ENCODE measurements at regions of chr16 and their contacts with region 1.

Region 1: DNA sequence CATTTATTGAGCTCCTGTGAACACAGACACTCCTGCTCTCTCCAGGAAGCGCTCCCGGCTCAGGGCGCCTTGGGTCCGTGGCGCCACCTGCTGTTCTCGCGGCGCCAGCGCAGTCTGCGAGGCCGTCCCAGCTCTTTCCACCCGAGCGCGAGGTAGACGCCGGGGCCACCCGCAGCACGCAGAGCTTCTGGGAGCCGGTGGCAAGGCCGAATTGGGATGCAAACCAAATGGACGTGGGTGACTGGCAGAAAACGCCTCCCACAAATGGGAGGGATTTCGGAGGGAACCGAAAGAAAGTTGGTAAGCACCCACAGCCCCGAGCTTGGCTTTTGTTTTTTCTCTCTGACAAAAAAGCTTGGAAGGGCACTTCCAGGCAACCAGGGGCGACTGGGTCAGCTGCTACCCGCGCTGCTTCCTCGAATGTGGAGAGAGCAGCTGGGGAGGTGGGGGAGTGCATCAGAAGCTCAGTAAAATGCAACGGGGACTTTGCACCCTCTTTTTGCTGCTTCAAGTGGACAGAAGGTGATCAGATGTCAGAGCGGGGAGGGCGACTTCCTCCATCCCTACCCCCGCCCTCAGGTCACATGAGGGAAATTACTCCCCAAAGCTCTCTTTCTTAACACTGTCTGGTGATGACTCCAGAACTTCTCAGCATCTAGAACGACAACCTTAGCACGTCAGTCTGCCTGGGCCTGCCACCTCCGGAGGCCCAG is 13.5 kb upstream of the N4BP1 start:
- DNase-seq: peak; percentile 50 to 90 (median 74)
- ATAC-seq: peak; percentile 97 to 98 (median 98)
- H3K4me3 ChIP-seq: peak overlapping the region; percentile 45 to 78
- H3K4me3 Mint-ChIP-seq: peak overlapping the region; percentile 72 to 81 (median 78)
- H3K27ac ChIP-seq: no peak overlapping the region
- H3K27ac Mint-ChIP-seq: peak overlapping the region; percentile 66
- H3K4me1 ChIP-seq: peaks cover 14 to 28% of the 10 kb centered on the region in 2 experiments
- H3K4me1 Mint-ChIP-seq: peaks cover 25 to 31% (median 26%) of the 10 kb centered on the region in 3 donors
- H3K27me3 ChIP-seq: peaks cover 0 to 5% of the 10 kb centered on the region in 2 experiments
- H3K27me3 Mint-ChIP-seq: no peaks in the 10 kb centered on the region

Region 2: GRCh38 chr16:48231727-48232492 is 391.6 kb before region 1 on chr16:
- CTCF ChIA-PET with region 1: no interaction called
- POLR2A ChIA-PET with region 1: no interaction called
- DNase-seq: peak in 17 of 35 experiments; percentile 3 to 39 (median 14)
- ATAC-seq: peak in 1 of 4 experiments; percentile 57
- H3K4me3 ChIP-seq: no peak overlapping the region
- H3K4me3 Mint-ChIP-seq: no peak overlapping the region
- H3K27ac ChIP-seq: no peak overlapping the region
- H3K27ac Mint-ChIP-seq: no peak overlapping the region
- H3K4me1 ChIP-seq: no peaks in the 10 kb centered on the region
- H3K4me1 Mint-ChIP-seq: no peaks in the 10 kb centered on the region
- H3K27me3 ChIP-seq: peaks cover 0 to 5% of the 10 kb centered on the region in 2 experiments
- H3K27me3 Mint-ChIP-seq: peaks cover 7 to 8% of the 10 kb centered on the region in 2 donors

Region 3: GRCh38 chr16:48353565-48354163 is 269.8 kb before region 1 on chr16:
- CTCF ChIA-PET with region 1: interaction called, 27 to 77 read pairs
- POLR2A ChIA-PET with region 1: interaction called, 4 to 12 read pairs
- DNase-seq: peak; percentile 30 to 87 (median 67)
- ATAC-seq: peak; percentile 88 to 94 (median 92)
- H3K4me3 ChIP-seq: no peak overlapping the region
- H3K4me3 Mint-ChIP-seq: no peak overlapping the region
- H3K27ac ChIP-seq: no peak overlapping the region
- H3K27ac Mint-ChIP-seq: peak overlapping the region; percentile 56 to 73
- H3K4me1 ChIP-seq: peaks cover 2 to 3% of the 10 kb centered on the region in 2 experiments
- H3K4me1 Mint-ChIP-seq: peaks cover 7 to 10% (median 10%) of the 10 kb centered on the region in 3 donors
- H3K27me3 ChIP-seq: no peaks in the 10 kb centered on the region
- H3K27me3 Mint-ChIP-seq: no peaks in the 10 kb centered on the region

Region 4: DNA sequence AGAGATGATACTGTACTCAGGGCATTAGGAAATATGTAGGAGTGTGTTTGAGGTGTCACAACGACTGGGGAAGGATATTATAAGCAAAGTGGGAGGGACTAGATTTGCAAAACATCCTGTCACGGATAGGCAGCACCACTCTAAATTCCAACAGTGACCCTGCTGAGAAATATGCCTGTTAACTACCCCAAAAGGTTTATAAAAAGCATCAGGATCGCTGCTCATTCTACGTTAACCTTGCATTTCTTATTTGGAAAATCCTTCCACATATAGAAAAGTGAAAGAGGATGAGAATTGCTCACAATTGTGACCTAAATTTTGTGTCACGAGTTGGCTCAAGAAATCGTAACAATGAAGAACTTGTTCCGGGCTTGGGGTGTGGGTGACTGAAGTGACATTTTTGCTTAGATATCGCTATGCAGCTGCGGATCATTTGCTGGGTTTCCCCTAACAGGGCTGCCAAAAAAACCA is 65.1 kb before region 1 on chr16:
- CTCF ChIA-PET with region 1: interaction called, 10 to 33 read pairs
- POLR2A ChIA-PET with region 1: interaction called in 1 of 2 experiments, 3 read pairs
- DNase-seq: peak in 3 of 35 experiments; percentile 16 to 56 (median 19)
- ATAC-seq: peak in 3 of 4 experiments; percentile 38 to 56 (median 52)
- H3K4me3 ChIP-seq: no peak overlapping the region
- H3K4me3 Mint-ChIP-seq: peak overlapping the region; percentile 11 to 53 (median 45)
- H3K27ac ChIP-seq: no peak overlapping the region
- H3K27ac Mint-ChIP-seq: peak overlapping the region; percentile 76 to 85
- H3K4me1 ChIP-seq: peaks cover 25 to 26% of the 10 kb centered on the region in 2 experiments
- H3K4me1 Mint-ChIP-seq: peaks cover 71 to 88% (median 84%) of the 10 kb centered on the region in 3 donors
- H3K27me3 ChIP-seq: no peaks in the 10 kb centered on the region
- H3K27me3 Mint-ChIP-seq: no peaks in the 10 kb centered on the region

Region 5: GRCh38 chr16:48596326-48596725 is 27.1 kb before region 1 on chr16:
- CTCF ChIA-PET with region 1: interaction called, 7 to 10 read pairs
- POLR2A ChIA-PET with region 1: interaction called in 1 of 2 experiments, 4 read pairs
- DNase-seq: peak in 2 of 35 experiments; percentile 8 to 49
- ATAC-seq: peak in 2 of 4 experiments; percentile 48 to 56
- H3K4me3 ChIP-seq: no peak overlapping the region
- H3K4me3 Mint-ChIP-seq: peak overlapping the region in 1 of 3 donors; percentile 8
- H3K27ac ChIP-seq: no peak overlapping the region
- H3K27ac Mint-ChIP-seq: peak overlapping the region; percentile 69 to 75
- H3K4me1 ChIP-seq: peaks cover 15 to 19% of the 10 kb centered on the region in 2 experiments
- H3K4me1 Mint-ChIP-seq: peaks cover 60 to 67% (median 65%) of the 10 kb centered on the region in 3 donors
- H3K27me3 ChIP-seq: no peaks in the 10 kb centered on the region
- H3K27me3 Mint-ChIP-seq: no peaks in the 10 kb centered on the region

Region 6: DNA sequence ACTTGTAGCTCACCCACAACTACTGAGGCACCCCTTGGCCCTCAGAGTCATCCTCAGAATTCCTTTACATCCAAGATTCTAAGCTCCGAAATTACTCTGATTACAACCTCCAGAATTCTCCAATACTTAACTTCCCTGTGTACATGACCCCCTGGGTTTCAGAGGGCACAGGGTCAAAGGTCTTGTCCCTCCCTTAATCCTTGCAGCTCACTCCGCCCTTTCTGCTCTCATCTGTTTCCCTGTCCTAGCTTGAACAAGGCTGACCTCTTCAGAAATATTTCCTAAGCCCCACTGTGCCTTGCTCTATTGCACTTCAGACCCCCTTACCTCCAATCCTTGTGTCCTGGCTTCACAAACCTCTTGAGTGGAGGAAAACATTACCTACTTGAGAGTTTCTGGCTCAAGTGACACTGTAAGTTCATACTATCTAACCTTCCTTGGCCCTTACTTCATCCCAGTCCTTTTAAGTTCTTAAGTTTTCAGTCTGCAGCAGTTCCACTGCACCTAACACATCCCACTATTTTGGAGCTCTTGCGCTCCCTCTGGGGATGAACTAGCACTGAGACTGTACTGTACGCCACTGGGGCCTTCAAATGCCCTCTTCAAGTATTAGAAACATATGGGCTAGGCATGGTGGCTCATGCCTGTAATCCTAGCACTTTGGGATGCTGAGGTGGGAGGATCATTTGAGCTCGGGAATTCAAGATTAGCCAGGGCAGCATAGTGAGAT is 19.6 kb before region 1 on chr16:
- CTCF ChIA-PET with region 1: interaction called, 10 to 23 read pairs
- POLR2A ChIA-PET with region 1: interaction called in 1 of 2 experiments, 4 read pairs
- DNase-seq: no peak
- ATAC-seq: no peak
- H3K4me3 ChIP-seq: no peak overlapping the region
- H3K4me3 Mint-ChIP-seq: peak overlapping the region; percentile 26 to 44 (median 44)
- H3K27ac ChIP-seq: no peak overlapping the region
- H3K27ac Mint-ChIP-seq: peak overlapping the region; percentile 25 to 57
- H3K4me1 ChIP-seq: peaks cover 35 to 58% of the 10 kb centered on the region in 2 experiments
- H3K4me1 Mint-ChIP-seq: peaks cover 48 to 56% (median 53%) of the 10 kb centered on the region in 3 donors
- H3K27me3 ChIP-seq: no peaks in the 10 kb centered on the region
- H3K27me3 Mint-ChIP-seq: no peaks in the 10 kb centered on the region

Region 7: DNA sequence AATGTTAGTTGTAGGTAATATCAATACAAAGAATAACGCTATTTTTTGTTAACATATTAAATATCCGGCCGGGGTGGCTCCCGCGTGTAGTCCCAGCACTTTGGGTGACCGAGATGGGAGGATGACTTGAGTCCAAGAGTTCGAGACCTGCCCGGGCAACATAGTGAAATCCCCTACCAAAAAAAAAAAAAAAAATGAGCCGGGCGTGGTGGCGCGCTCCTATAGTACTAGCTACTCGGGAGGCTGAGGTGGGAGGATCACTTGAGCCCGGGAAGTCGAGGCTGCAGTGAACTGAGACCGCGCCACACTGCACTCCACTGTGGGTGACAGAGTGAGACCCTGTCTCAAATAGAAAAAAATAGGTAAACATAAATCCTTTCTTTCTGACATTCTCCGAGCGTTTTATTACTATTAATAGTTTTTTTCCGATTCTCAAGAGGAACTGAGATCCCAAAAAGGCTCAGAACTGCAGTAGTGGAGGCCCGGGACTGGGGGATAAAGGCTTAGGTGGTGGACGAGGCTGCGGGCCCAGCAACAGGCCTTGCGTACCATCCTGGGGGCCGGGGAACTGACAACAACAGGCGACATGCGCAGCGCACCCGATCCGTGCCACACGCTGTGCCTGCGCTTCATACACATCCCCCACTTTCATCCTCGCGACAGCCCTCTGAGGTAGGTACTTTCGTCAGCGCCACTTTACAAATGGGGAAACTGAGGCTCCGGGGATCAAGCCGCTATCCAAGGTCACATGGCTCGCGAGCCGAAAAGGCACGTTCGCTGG is 14.4 kb before region 1 on chr16:
- CTCF ChIA-PET with region 1: interaction called, 10 to 53 read pairs
- POLR2A ChIA-PET with region 1: interaction called, 4 to 10 read pairs
- DNase-seq: peak in 27 of 35 experiments; percentile 22 to 60 (median 45)
- ATAC-seq: no peak
- H3K4me3 ChIP-seq: peak overlapping the region; percentile 79 to 85
- H3K4me3 Mint-ChIP-seq: no peak overlapping the region
- H3K27ac ChIP-seq: peak overlapping the region; percentile 82
- H3K27ac Mint-ChIP-seq: peak overlapping the region; percentile 84 to 91
- H3K4me1 ChIP-seq: peaks cover 41 to 88% of the 10 kb centered on the region in 2 experiments
- H3K4me1 Mint-ChIP-seq: peaks cover 37 to 45% (median 40%) of the 10 kb centered on the region in 3 donors
- H3K27me3 ChIP-seq: no peaks in the 10 kb centered on the region
- H3K27me3 Mint-ChIP-seq: peaks cover 0 to 1% of the 10 kb centered on the region in 2 donors

Measured in T-cell (primary cell).